Thyroid gland (tissue), 4 donors: ENCODE measurements at regions of chr4 and their contacts with region 1.

Region 1: GRCh38 chr4:153127760-153128494 is 76.3 kb upstream of the TRIM2 start:
- DNase-seq: peak; percentile 89
- H3K4me3 ChIP-seq: no peak overlapping the region
- H3K27ac ChIP-seq: no peak overlapping the region
- H3K4me1 ChIP-seq: no peaks in the 10 kb centered on the region
- H3K27me3 ChIP-seq: no peaks in the 10 kb centered on the region
- CTCF ChIP-seq: peak; percentile 60 to 86 (median 76)
- POLR2A ChIP-seq: no peak

Region 2: DNA sequence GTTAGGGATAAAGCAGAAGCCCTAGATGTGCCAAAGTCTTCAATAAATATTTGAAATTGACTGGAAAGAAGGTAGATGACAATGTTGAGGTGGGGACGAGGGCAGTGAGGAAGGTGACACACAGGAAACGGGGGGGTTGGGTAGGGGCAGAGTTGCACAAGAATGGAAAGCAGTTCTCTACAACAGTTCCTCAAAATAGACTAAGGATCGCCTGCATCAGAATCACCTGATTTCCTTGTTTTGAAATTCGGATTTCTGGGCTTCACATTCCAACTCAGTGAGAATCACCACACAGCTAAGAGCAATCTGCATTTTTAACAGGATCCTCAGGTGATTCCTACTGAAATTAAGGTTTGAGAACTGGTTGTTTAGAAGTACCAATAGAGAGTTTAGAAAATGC is 277.6 kb before region 1 on chr4:
- intact Hi-C with region 1: loop called (anchors 10 kb)
- DNase-seq: peak; percentile 50 to 62
- H3K4me3 ChIP-seq: no peak overlapping the region
- H3K27ac ChIP-seq: peak overlapping the region in 2 of 3 donors; percentile 5 to 64
- H3K4me1 ChIP-seq: peaks cover 0 to 13% of the 10 kb centered on the region in 2 donors
- H3K27me3 ChIP-seq: no peaks in the 10 kb centered on the region
- CTCF ChIP-seq: no peak
- POLR2A ChIP-seq: no peak

Region 3: DNA sequence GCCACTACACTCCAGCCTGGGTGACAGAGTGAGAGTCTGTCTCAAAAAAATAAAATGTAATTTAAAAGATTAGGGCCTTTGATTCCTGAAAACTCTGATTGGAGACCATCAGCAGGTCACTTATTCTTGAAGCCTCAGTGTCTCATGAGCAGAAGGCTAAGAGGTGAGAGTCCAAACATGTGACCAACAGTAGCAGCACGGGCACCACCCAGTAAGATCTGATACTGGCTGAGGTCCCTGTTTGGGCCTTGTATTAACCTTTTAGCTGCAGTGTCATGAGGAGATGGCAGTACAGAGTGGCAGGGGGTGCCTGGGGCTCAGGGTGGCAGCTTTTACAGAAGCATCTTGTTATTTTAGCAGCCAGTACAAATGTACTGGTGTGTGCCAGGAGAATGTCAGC is 102.5 kb before region 1 on chr4:
- intact Hi-C with region 1: no loop called
- DNase-seq: peak in 1 of 2 donors; percentile 8
- H3K4me3 ChIP-seq: no peak overlapping the region
- H3K27ac ChIP-seq: no peak overlapping the region
- H3K4me1 ChIP-seq: peaks cover 0 to 7% of the 10 kb centered on the region in 2 donors
- H3K27me3 ChIP-seq: no peaks in the 10 kb centered on the region
- CTCF ChIP-seq: no peak
- POLR2A ChIP-seq: no peak